Spleen (tissue), 13 donors: ENCODE measurements at regions of chr17 and their contacts with region 1.

Region 1: GRCh38 chr17:41663451-41664345 is 25.0 kb upstream of the EIF1 start:
- DNase-seq: no peak
- H3K4me3 ChIP-seq: no peak overlapping the region
- H3K27ac ChIP-seq: no peak overlapping the region
- H3K4me1 ChIP-seq: peaks cover 14 to 53% (median 38%) of the 10 kb centered on the region in 6 donors
- H3K27me3 ChIP-seq: no peaks in the 10 kb centered on the region
- CTCF ChIP-seq: no peak
- POLR2A ChIP-seq: no peak

Region 2: GRCh38 chr17:40857535-40857934 is 806.2 kb before region 1 on chr17:
- intact Hi-C with region 1: loop called (anchors 5 kb)
- DNase-seq: no peak
- H3K4me3 ChIP-seq: no peak overlapping the region
- H3K27ac ChIP-seq: no peak overlapping the region
- H3K4me1 ChIP-seq: peaks cover 0 to 4% (median 0%) of the 10 kb centered on the region in 6 donors
- H3K27me3 ChIP-seq: peaks cover 0 to 13% (median 0%) of the 10 kb centered on the region in 7 donors
- CTCF ChIP-seq: no peak
- POLR2A ChIP-seq: no peak

Region 3: DNA sequence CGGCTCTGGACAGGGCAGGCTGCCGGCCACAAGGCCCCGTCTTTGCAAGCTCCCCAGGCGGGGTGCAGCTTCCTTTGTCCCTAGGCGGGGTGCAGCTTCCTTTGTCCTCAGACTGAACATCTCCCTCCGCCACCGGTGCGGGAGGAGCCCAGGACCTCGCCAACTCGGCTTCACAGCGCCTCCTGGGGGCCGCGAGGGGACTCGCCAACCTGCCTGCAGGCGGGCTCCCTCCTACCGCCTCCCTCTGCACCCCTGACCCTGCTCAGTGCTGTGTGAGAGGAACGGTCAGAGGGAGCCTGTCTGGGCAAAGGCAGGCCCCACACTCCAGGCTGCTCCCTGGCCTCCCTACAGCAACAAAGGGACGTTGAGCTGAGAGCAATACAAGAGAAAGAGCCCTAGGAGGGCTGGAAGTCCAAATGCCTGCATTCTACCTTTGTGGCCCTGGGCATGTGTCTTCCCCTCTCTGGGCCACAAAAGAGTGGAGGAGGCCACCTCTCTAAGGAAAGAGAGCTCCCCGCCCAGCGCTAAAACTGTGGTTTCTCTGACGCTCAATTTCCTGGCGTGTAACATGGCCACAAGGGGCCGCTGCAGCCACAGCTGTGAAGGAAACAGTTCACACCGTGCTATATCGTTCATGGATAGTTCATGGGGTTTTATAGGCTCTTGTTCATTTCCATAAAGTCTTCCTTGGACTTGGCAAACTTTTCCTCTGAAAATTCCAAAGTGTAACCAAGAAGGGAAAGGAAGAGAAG is 114.7 kb before region 1 on chr17:
- intact Hi-C with region 1: loop called (anchors 5 kb)
- DNase-seq: peak; percentile 95
- H3K4me3 ChIP-seq: peak overlapping the region in 5 of 8 donors; percentile 13 to 57 (median 21)
- H3K27ac ChIP-seq: peak overlapping the region in 5 of 8 donors; percentile 55 to 75 (median 65)
- H3K4me1 ChIP-seq: peaks cover 12 to 24% (median 22%) of the 10 kb centered on the region in 6 donors
- H3K27me3 ChIP-seq: peaks cover 0 to 20% (median 0%) of the 10 kb centered on the region in 7 donors
- CTCF ChIP-seq: peak; percentile 69 to 94 (median 86)
- POLR2A ChIP-seq: no peak

Region 4: DNA sequence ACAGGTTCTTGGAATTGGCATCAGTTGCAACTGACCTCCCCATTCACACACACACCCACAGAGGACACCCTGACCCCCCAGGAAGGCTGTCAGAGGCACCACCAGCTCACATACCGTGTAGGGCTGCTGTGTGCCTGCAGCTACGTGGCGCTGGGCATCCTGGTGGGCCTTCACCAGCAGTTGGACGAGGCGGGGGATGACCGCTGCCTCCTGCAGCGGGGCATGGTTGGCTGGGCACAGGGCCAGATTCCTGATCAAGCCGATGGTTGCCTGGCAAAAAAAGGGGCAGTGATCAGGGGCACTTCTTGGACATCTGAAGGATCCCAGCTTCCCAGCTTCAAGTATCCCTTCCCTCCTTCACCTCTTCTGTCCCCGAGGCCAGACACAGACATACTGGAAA is 94.9 kb after region 1 on chr17:
- intact Hi-C with region 1: no loop called
- DNase-seq: no peak
- H3K4me3 ChIP-seq: no peak overlapping the region
- H3K27ac ChIP-seq: no peak overlapping the region
- H3K4me1 ChIP-seq: no peaks in the 10 kb centered on the region
- H3K27me3 ChIP-seq: no peaks in the 10 kb centered on the region
- CTCF ChIP-seq: no peak
- POLR2A ChIP-seq: no peak